Ascending aorta (tissue), 2 donors: ENCODE measurements at regions of chr3 and their contacts with region 1.

Region 1: DNA sequence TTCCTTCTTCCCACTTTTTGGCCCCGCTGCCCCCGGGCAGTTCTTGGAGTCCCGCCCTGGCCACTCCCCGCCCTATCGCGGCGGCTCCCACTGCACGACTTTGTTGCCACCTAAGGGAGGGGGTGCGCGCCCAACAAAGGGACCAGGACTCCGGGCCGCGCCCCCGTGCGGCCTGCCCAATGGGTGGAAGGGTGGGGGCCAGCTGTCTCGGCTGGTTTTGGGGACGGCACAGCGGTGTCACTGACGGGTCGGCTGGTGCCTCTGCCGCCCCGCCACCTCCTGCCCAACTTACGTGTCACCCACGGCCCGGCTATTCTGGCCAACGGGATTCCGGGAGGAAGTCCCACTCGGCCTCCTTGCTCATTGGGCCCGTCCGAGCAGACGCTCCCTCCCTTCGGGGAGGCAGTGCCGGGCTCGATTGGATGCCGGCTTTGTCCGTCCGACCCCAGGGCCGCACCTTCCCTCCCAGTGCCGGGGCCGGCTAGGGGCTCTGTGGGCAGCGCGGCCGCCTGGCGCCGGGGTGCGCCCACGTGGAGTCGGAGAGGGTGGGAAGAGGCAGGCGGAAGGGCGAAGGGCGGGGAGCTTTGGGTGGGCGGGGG is at the start of gene GOLIM4:
- DNase-seq: peak; percentile 88 to 98
- H3K4me3 ChIP-seq: peak within 1 kb of the TSS; percentile 71 to 79
- H3K27ac ChIP-seq: peak within 1 kb of the TSS; percentile 93 to 95
- H3K4me1 ChIP-seq: peaks cover 0 to 18% of the 10 kb centered on the region in 2 donors
- H3K27me3 ChIP-seq: no peaks in the 10 kb centered on the region
- CTCF ChIP-seq: no peak
- total RNA-seq, gene GOLIM4: 43.1 TPM

Region 2: GRCh38 chr3:167734498-167735232 is 361.0 kb before region 1 on chr3 and contains the start of gene PDCD10:
- intact Hi-C with region 1: loop called (anchors 5 kb)
- DNase-seq: peak; percentile 95 to 99
- H3K4me3 ChIP-seq: peak within 1 kb of the TSS; percentile 91
- H3K27ac ChIP-seq: peak within 1 kb of the TSS; percentile 89 to 92
- H3K4me1 ChIP-seq: peaks cover 0 to 22% of the 10 kb centered on the region in 2 donors
- H3K27me3 ChIP-seq: no peaks in the 10 kb centered on the region
- CTCF ChIP-seq: no peak
- total RNA-seq, gene PDCD10: 55.6 TPM

Region 3: GRCh38 chr3:167814441-167814951 is 281.2 kb before region 1 on chr3:
- intact Hi-C with region 1: loop called (anchors 1 kb)
- DNase-seq: peak in 1 of 2 donors; percentile 75
- H3K4me3 ChIP-seq: peak overlapping the region in 1 of 2 donors; percentile 1
- H3K27ac ChIP-seq: peak overlapping the region; percentile 62 to 73
- H3K4me1 ChIP-seq: peaks cover 10 to 28% of the 10 kb centered on the region in 2 donors
- H3K27me3 ChIP-seq: no peaks in the 10 kb centered on the region
- CTCF ChIP-seq: no peak

Region 4: GRCh38 chr3:168047190-168047795 is 48.4 kb before region 1 on chr3:
- intact Hi-C with region 1: loop called (anchors 2 kb)
- DNase-seq: no peak
- H3K4me3 ChIP-seq: no peak overlapping the region
- H3K27ac ChIP-seq: no peak overlapping the region
- H3K4me1 ChIP-seq: peaks cover 0 to 19% of the 10 kb centered on the region in 2 donors
- H3K27me3 ChIP-seq: no peaks in the 10 kb centered on the region
- CTCF ChIP-seq: peak; percentile 72 to 89 (median 82)

Region 5: GRCh38 chr3:168165390-168166269 is 69.9 kb after region 1 on chr3:
- intact Hi-C with region 1: loop called (anchors 2 kb)
- DNase-seq: peak in 1 of 2 donors; percentile 77
- H3K4me3 ChIP-seq: no peak overlapping the region
- H3K27ac ChIP-seq: no peak overlapping the region
- H3K4me1 ChIP-seq: no peaks in the 10 kb centered on the region
- H3K27me3 ChIP-seq: no peaks in the 10 kb centered on the region
- CTCF ChIP-seq: peak; percentile 71 to 84 (median 75)

Region 6: DNA sequence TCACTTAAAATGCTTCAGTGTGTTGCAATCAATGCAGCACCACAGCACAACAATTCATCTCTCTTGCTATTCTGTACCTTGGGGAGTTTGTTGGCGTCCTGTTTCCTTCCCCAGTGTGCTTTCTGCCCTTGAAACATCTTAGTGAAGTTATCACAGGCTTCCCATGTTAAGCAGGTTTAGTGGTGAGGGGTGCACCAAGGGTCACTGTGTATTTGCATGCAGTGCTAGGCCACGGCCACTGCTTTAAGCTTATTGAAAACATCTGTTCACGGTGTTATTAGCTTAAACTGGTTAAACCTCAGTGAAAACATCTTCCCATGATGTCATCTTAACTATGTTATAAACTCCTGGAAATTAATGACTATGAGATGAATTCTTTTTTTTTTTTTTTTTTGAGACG is 217.3 kb after region 1 on chr3:
- intact Hi-C with region 1: no loop called
- DNase-seq: no peak
- H3K4me3 ChIP-seq: no peak overlapping the region
- H3K27ac ChIP-seq: no peak overlapping the region
- H3K4me1 ChIP-seq: no peaks in the 10 kb centered on the region
- H3K27me3 ChIP-seq: no peaks in the 10 kb centered on the region
- CTCF ChIP-seq: no peak

Region 7: GRCh38 chr3:169764452-169765274 is 1669.0 kb after region 1 on chr3 and contains the start of gene TERC:
- intact Hi-C with region 1: loop called (anchors 5 kb)
- DNase-seq: peak; percentile 77 to 98
- H3K4me3 ChIP-seq: peak within 1 kb of the TSS; percentile 75 to 83
- H3K27ac ChIP-seq: peak within 1 kb of the TSS; percentile 96 to 97
- H3K4me1 ChIP-seq: peaks cover 3 to 8% of the 10 kb centered on the region in 2 donors
- H3K27me3 ChIP-seq: no peaks in the 10 kb centered on the region
- CTCF ChIP-seq: no peak
- total RNA-seq, gene TERC: 260 TPM

Region 8: DNA sequence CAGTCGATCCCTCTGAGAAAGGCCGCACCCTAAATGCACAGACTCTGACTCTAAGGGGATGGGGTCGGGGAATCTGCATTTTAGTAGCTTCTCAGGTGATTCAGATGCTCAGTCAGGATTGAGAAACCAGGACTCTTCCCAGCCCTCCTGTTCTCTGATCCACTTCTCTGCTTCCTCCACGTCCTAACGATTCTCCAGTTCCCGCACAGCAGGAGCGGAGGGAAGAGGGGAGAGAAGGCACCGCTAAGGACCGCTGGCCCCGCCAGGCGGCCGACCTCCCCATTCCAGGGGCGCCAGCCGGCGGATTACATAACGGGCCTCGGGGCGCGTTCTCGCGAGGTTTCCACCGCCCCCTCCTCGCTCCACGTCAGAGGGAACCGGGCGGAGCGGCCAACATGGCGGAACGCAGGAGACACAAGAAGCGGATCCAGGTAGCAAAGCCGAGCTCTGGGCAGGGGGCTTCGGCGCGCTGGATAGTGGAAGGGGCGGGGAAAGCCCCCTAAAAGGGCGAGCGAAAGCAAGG is 1870.8 kb after region 1 on chr3 and contains the start of gene SEC62:
- intact Hi-C with region 1: loop called (anchors 10 kb)
- DNase-seq: peak; percentile 73 to 96
- H3K4me3 ChIP-seq: peak within 1 kb of the TSS; percentile 79 to 89
- H3K27ac ChIP-seq: peak within 1 kb of the TSS; percentile 86 to 93
- H3K4me1 ChIP-seq: peaks cover 4 to 12% of the 10 kb centered on the region in 2 donors
- H3K27me3 ChIP-seq: no peaks in the 10 kb centered on the region
- CTCF ChIP-seq: peak in 2 of 3 experiments; percentile 33 to 38
- total RNA-seq, gene SEC62: 20.5 TPM